ENCODE measurements at regions of chr6 and their contacts with region 1.

Region 1: DNA sequence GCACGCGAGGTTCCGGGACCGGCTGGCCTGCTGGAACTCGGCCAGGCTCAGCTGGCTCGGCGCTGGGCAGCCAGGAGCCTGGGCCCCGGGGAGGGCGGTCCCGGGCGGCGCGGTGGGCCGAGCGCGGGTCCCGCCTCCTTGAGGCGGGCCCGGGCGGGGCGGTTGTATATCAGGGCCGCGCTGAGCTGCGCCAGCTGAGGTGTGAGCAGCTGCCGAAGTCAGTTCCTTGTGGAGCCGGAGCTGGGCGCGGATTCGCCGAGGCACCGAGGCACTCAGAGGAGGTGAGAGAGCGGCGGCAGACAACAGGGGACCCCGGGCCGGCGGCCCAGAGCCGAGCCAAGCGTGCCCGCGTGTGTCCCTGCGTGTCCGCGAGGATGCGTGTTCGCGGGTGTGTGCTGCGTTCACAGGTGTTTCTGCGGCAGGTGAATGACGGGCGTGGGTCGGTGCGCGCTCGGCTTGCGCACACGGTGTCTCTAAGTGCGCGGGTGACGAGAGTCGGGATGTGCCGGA is at the start of gene CDKN1A:
- DNase-seq: peak; percentile 80
- ATAC-seq: peak; percentile 54
- H3K4me3 Mint-ChIP-seq: peak within 1 kb of the TSS; percentile 94
- H3K27ac Mint-ChIP-seq: peak within 1 kb of the TSS; percentile 94
- H3K4me1 Mint-ChIP-seq: peaks cover 44% of the 10 kb centered on the region
- H3K27me3 Mint-ChIP-seq: no peaks in the 10 kb centered on the region
- CTCF ChIP-seq: no peak
- total RNA-seq, gene CDKN1A: 46.9 and 50.4 TPM in 2 replicates

Region 2: DNA sequence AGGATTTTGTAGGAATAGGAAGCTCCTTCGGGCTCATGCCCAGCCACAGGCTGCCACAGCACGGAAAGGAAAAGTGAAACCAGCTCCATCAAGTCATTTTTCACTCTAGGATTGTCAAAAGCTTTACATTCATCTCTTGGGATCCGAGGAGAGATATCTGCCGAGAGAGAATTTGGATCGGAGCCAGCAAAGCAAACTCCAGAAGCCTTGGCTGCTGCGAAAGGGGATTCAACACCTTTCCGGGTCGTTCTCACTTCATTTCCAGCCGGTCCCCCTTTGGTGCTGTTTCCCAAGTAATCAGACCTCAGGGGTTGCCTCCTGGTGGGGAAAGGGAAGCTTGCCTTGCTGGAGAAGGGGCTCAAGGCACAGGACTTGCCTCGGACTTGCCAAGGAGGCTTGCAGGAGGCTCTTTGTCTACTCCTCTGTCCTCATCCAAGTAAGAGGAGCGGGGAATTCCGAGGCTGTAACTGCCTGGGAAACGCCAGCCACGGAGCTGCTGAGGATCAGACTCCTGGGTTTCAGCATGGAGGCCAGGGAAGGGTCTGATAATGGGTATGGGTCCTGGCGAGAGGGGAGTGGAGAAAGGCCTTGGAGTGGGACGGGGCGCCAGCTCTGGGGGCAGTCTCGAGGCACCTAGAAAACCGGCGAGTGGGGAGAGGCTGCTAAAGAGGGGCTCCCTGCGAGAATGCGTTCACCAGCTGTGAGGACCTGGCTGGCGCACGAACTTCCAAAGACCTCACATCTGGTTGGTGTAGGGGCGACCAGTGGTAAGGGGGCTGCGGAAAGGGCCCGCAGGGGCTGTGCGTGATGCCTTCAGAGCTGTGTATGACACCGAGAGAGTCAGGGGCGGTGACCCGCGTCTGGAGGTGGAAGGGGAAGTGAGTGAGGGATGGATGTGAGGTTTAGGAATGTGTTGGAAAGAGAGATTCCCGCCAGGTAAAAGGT is 291.8 kb before region 1 on chr6:
- CTCF ChIA-PET with region 1: no interaction called
- POLR2A ChIA-PET with region 1: no interaction called
- intact Hi-C with region 1: no loop called
- DNase-seq: peak; percentile 27
- ATAC-seq: peak; percentile 47
- H3K4me3 Mint-ChIP-seq: peak overlapping the region; percentile 79
- H3K27ac Mint-ChIP-seq: no peak overlapping the region
- H3K4me1 Mint-ChIP-seq: peaks cover 31% of the 10 kb centered on the region
- H3K27me3 Mint-ChIP-seq: peaks cover 35% of the 10 kb centered on the region
- CTCF ChIP-seq: no peak

Region 3: GRCh38 chr6:36442671-36443470 is 235.7 kb before region 1 on chr6 and contains the starts of genes KCTD20 and PXT1:
- CTCF ChIA-PET with region 1: no interaction called
- POLR2A ChIA-PET with region 1: no interaction called
- intact Hi-C with region 1: loop called (anchors 2 kb)
- DNase-seq: peak; percentile 85
- ATAC-seq: peak; percentile 84
- H3K4me3 Mint-ChIP-seq: peak within 1 kb of the TSS; percentile 98
- H3K27ac Mint-ChIP-seq: peak within 1 kb of the TSS; percentile 96
- H3K4me1 Mint-ChIP-seq: peaks cover 46% of the 10 kb centered on the region
- H3K27me3 Mint-ChIP-seq: no peaks in the 10 kb centered on the region
- CTCF ChIP-seq: no peak
- total RNA-seq, gene KCTD20: 45.5 and 48.1 TPM in 2 replicates
- total RNA-seq, gene PXT1: 0.11 and 0.22 TPM in 2 replicates

Region 4: DNA sequence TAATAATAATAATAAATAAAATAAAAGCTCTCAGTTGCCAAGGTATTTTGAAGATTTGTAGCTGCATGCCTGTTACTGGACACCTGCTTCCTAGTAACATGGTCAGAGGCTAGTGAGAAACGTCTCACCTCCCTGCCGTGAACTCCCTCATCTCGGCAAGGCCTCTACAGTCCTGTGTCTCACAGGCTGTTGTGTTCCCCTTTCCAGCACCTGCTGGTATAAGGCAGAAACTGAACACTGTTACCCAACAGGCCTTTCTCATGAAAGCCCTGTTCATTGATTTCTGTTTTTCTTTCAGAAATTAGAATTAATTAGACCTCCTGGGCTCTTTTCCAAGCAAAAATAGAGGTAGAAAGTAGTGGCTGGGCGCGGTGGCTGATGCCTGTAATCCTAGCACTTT is 102.0 kb before region 1 on chr6:
- CTCF ChIA-PET with region 1: no interaction called
- POLR2A ChIA-PET with region 1: no interaction called
- intact Hi-C with region 1: no loop called
- DNase-seq: no peak
- ATAC-seq: no peak
- H3K4me3 Mint-ChIP-seq: no peak overlapping the region
- H3K27ac Mint-ChIP-seq: no peak overlapping the region
- H3K4me1 Mint-ChIP-seq: peaks cover 4% of the 10 kb centered on the region
- H3K27me3 Mint-ChIP-seq: no peaks in the 10 kb centered on the region
- CTCF ChIP-seq: no peak

Region 5: GRCh38 chr6:36615018-36615761 is 63.4 kb before region 1 on chr6:
- CTCF ChIA-PET with region 1: interaction called, 7 read pairs
- POLR2A ChIA-PET with region 1: interaction called, 7 read pairs
- intact Hi-C with region 1: loop called (anchors 1 kb)
- DNase-seq: no peak
- ATAC-seq: peak; percentile 84
- H3K4me3 Mint-ChIP-seq: no peak overlapping the region
- H3K27ac Mint-ChIP-seq: peak overlapping the region; percentile 66
- H3K4me1 Mint-ChIP-seq: peaks cover 21% of the 10 kb centered on the region
- H3K27me3 Mint-ChIP-seq: no peaks in the 10 kb centered on the region
- CTCF ChIP-seq: peak; percentile 83

Region 6: GRCh38 chr6:36666726-36667591 is 11.6 kb before region 1 on chr6:
- CTCF ChIA-PET with region 1: interaction called, 3 read pairs
- POLR2A ChIA-PET with region 1: interaction called, 10 read pairs
- intact Hi-C with region 1: no loop called
- DNase-seq: no peak
- ATAC-seq: peak; percentile 18
- H3K4me3 Mint-ChIP-seq: no peak overlapping the region
- H3K27ac Mint-ChIP-seq: no peak overlapping the region
- H3K4me1 Mint-ChIP-seq: peaks cover 38% of the 10 kb centered on the region
- H3K27me3 Mint-ChIP-seq: no peaks in the 10 kb centered on the region
- CTCF ChIP-seq: no peak

Region 7: GRCh38 chr6:36735110-36736071 is 56.8 kb after region 1 on chr6:
- CTCF ChIA-PET with region 1: interaction called, 7 read pairs
- POLR2A ChIA-PET with region 1: interaction called, 11 read pairs
- intact Hi-C with region 1: no loop called
- DNase-seq: no peak
- ATAC-seq: peak; percentile 90
- H3K4me3 Mint-ChIP-seq: peak overlapping the region; percentile 72
- H3K27ac Mint-ChIP-seq: peak overlapping the region; percentile 65
- H3K4me1 Mint-ChIP-seq: peaks cover 45% of the 10 kb centered on the region
- H3K27me3 Mint-ChIP-seq: no peaks in the 10 kb centered on the region
- CTCF ChIP-seq: no peak

Region 8: DNA sequence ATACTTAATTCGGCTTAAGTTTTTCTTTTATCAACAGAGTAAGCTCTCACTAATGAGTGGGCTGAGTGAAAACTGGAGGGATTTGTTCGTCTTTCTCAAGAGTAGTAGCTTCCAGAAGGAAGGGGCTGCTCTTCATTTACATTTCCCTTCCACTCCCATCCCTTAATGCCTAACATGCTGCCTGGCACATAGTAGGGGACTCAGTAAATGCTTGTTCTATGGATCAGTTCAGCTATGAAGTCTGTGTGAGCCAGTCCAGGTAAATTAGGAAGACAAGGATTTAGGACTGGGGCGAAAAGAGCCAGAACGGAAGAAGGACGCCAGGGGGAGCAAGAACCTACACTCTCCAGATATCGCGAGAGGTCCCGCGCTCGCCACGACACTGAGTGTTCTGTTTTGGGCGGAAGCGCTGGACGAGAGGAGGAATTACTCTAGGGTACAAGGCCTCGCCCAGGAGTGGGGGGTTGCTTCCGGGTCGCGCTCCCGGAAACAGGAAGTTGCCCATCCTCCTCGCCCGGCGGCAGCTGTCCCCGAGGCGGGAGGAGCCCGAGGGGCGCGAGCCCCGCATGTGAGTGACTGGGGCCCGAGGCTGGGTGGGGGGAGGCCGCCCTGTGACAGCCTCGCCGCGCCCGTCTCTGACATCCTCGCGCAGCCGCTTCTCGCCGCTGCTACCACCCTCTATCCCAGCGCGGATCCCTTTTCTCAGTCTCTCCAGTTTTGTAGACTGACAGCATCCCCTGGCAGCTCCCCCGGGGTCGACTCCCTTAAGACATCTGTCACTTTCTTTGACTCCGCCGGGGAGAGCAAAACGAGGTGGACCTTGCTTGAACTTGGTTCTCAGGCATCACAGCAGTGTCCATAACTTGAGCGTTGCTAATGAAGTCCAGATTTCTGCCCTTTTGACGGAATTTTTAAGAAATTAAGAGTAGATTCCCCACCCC is 207.2 kb after region 1 on chr6 and contains the start of gene C6orf89:
- CTCF ChIA-PET with region 1: no interaction called
- POLR2A ChIA-PET with region 1: no interaction called
- intact Hi-C with region 1: loop called (anchors 5 kb)
- DNase-seq: peak; percentile 89
- ATAC-seq: peak; percentile 99
- H3K4me3 Mint-ChIP-seq: peak within 1 kb of the TSS; percentile 89
- H3K27ac Mint-ChIP-seq: peak within 1 kb of the TSS; percentile 94
- H3K4me1 Mint-ChIP-seq: peaks cover 30% of the 10 kb centered on the region
- H3K27me3 Mint-ChIP-seq: no peaks in the 10 kb centered on the region
- CTCF ChIP-seq: peak; percentile 34
- total RNA-seq, gene C6orf89: 29.7 and 30.3 TPM in 2 replicates

Measured in activated B cell treated with CpG ODN at 0.5 μM for 24 hours (primary cell).